ENCODE measurements at regions of chr20 and their contacts with region 1.

Region 1: DNA sequence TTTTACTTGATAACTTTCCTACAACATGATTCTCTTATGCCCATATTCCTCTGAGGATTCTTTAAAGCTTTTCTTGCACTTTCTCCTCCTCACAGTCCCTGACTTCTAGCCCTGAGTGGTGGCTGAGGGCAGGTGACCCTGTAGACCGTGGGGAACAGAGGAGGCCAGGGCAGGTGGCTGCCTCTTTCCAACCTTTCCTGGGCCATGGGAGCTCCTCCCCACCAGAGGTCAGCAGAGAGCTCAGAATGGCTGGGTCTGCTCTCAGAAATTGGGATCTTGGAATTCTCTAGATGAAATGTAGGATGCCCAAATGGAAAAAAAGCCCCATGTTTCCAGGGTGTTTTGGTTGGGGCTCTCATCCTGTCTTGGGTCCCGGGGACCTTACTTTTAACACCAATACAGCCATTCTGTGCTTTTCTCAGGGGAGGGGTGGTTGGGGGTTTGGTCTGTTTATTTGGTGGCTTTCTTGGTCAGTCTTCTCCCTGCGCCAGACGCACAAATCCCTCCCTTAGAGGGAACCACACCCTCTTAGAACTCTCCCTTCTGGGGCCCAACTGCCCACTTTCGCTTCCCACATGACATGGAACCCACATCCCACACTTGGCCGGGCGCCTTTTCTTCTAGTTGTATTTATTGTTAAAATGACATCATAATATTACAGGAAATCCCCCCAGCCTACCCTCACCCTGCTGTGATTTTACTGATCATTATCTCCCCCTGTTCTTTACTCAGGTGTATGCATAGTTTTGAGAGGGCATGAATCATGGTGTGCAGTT is 17.9 kb downstream of the GNAS start:
- DNase-seq: no peak
- H3K4me3 ChIP-seq: no peak overlapping the region
- H3K27ac ChIP-seq: peak overlapping the region; percentile 11
- H3K27me3 ChIP-seq: peaks cover 10% of the 10 kb centered on the region
- CTCF ChIP-seq: peak; percentile 99

Region 2: GRCh38 chr20:58721951-58722778 is 148.3 kb before region 1 on chr20:
- CTCF ChIA-PET with region 1: no interaction called
- POLR2A ChIA-PET with region 1: no interaction called
- DNase-seq: no peak
- H3K4me3 ChIP-seq: no peak overlapping the region
- H3K27ac ChIP-seq: no peak overlapping the region
- H3K27me3 ChIP-seq: peaks cover 36% of the 10 kb centered on the region
- CTCF ChIP-seq: no peak

Region 3: DNA sequence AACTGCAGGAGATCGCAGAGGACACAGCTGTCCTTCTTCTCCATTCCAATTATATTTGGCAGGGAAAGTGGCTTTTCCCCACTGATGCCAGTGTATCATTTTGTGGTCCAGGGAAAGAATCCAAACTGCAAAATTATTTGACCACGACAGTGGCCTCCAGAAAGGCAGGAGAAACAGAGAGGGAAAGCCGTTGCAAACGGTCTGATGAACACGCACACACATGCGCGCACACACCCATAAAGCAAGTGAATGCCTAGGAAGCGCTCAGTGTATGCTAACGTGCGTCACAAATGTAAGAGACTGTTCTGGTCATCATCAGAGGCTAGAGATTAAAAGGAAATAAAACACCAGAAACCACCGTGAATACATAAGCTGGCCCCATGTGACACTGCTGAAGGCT is 123.8 kb before region 1 on chr20:
- CTCF ChIA-PET with region 1: no interaction called
- POLR2A ChIA-PET with region 1: no interaction called
- DNase-seq: no peak
- H3K4me3 ChIP-seq: no peak overlapping the region
- H3K27ac ChIP-seq: no peak overlapping the region
- H3K27me3 ChIP-seq: peaks cover 32% of the 10 kb centered on the region
- CTCF ChIP-seq: no peak

Region 4: GRCh38 chr20:59055295-59055694 is 184.9 kb after region 1 on chr20:
- CTCF ChIA-PET with region 1: interaction called, 11 read pairs
- POLR2A ChIA-PET with region 1: no interaction called
- DNase-seq: no peak
- H3K4me3 ChIP-seq: no peak overlapping the region
- H3K27ac ChIP-seq: no peak overlapping the region
- H3K27me3 ChIP-seq: peaks cover 14% of the 10 kb centered on the region
- CTCF ChIP-seq: peak; percentile 46; the same call in 1 of the 2 replicates

Region 5: GRCh38 chr20:59207742-59208357 is 337.4 kb after region 1 on chr20:
- CTCF ChIA-PET with region 1: interaction called, 13 read pairs
- POLR2A ChIA-PET with region 1: no interaction called
- DNase-seq: no peak
- H3K4me3 ChIP-seq: no peak overlapping the region
- H3K27ac ChIP-seq: no peak overlapping the region
- H3K27me3 ChIP-seq: peaks cover 5% of the 10 kb centered on the region
- CTCF ChIP-seq: peak; percentile 29

Region 6: GRCh38 chr20:59455402-59456341 is 585.2 kb after region 1 on chr20:
- CTCF ChIA-PET with region 1: interaction called, 10 read pairs
- POLR2A ChIA-PET with region 1: no interaction called
- DNase-seq: no peak
- H3K4me3 ChIP-seq: no peak overlapping the region
- H3K27ac ChIP-seq: no peak overlapping the region
- H3K27me3 ChIP-seq: no peaks in the 10 kb centered on the region
- CTCF ChIP-seq: peak; percentile 54